ENCODE measurements at regions of chr19 and their contacts with region 1.

Region 1: GRCh38 chr19:7366701-7367420 is 18.1 kb downstream of the ARHGEF18 start:
- DNase-seq: no peak
- H3K4me3 ChIP-seq: no peak overlapping the region
- H3K27ac ChIP-seq: no peak overlapping the region
- H3K4me1 ChIP-seq: no peaks in the 10 kb centered on the region
- H3K27me3 ChIP-seq: no peaks in the 10 kb centered on the region

Region 2: GRCh38 chr19:7326105-7326877 is 40.6 kb before region 1 on chr19:
- CTCF ChIA-PET with region 1: no interaction called
- POLR2A ChIA-PET with region 1: no interaction called
- DNase-seq: peak in 1 of 3 donors; percentile 45
- H3K4me3 ChIP-seq: no peak overlapping the region
- H3K27ac ChIP-seq: no peak overlapping the region
- H3K4me1 ChIP-seq: peaks cover 0 to 3% (median 0%) of the 10 kb centered on the region in 4 experiments
- H3K27me3 ChIP-seq: no peaks in the 10 kb centered on the region

Region 3: DNA sequence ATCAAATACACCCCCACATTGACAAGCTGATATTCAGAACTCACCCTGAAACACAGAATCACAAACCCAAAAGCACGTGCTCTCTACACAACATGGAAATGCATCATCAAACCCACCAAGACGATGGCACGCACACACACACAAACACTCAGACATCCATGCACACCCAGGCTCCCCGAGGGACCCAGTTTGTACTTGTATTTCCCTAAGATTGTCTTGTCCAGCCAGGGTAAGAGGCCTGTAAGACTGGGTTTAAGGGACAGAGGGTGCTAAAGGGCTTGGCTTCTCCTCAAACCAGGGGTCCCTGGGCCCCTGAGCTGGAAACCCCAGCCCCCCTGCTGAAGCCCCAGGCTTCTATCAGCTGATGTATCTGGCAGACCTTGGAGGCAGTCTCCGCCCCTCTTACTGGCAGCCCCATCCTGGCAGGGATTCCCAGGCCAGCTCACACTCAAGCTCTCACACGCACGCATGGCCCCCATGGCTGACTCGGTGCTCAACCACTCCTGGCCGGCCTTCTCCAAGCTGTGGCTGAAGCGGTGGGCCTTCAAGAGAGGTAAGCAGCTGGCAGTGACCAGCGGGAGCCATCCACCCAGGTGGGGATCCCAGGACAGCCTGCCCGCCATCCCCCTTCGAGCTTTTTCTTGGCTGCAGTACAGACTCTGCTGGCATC is 11.6 kb before region 1 on chr19:
- CTCF ChIA-PET with region 1: interaction called, 12 read pairs
- POLR2A ChIA-PET with region 1: no interaction called
- DNase-seq: no peak
- H3K4me3 ChIP-seq: no peak overlapping the region
- H3K27ac ChIP-seq: no peak overlapping the region
- H3K4me1 ChIP-seq: peaks cover 0 to 7% (median 3%) of the 10 kb centered on the region in 4 experiments
- H3K27me3 ChIP-seq: no peaks in the 10 kb centered on the region